ENCODE measurements at regions of chr15 and their contacts with region 1.

Region 1: DNA sequence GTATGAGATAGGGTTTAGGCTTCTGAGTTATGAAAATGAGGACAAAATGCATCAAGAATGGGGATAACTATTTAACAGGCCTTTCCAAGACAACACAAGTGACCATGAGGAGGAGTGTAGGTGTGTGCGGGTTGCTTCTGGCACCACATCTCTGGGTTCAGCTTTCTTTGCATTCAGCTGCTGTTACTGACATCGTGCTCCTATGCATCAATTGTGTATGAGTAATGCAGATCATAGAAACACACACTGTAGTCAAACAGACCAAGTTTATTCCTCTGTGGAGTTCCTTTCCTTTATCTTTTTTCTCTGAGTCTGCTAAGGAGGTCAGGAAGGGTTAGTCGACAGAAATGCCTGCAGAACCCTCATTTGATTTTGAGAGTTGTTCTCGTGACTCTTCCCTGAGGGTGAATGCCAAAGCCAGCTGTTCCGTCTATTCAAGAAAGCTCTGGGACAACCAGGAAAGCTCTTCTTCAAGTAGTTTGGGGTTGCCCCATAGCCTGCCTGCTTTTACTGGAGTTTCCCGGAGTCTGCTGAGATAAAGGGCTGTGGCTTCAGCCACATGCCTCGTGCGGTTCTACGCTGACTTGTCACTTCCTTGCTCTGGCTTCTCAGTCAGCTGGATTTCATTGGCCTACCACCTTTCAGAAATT is 136.7 kb upstream of the TLE3 start:
- DNase-seq: no peak
- H3K4me3 ChIP-seq: no peak overlapping the region
- H3K27ac ChIP-seq: no peak overlapping the region
- H3K4me1 ChIP-seq: no peaks in the 10 kb centered on the region
- H3K27me3 ChIP-seq: no peaks in the 10 kb centered on the region
- CTCF ChIP-seq: no peak
- POLR2A ChIP-seq: no peak

Region 2: GRCh38 chr15:69810431-69811354 is 423.7 kb before region 1 on chr15:
- intact Hi-C with region 1: loop called (anchors 5 kb)
- DNase-seq: no peak
- H3K4me3 ChIP-seq: no peak overlapping the region
- H3K27ac ChIP-seq: no peak overlapping the region
- H3K4me1 ChIP-seq: no peaks in the 10 kb centered on the region
- H3K27me3 ChIP-seq: no peaks in the 10 kb centered on the region
- CTCF ChIP-seq: no peak
- POLR2A ChIP-seq: no peak

Region 3: DNA sequence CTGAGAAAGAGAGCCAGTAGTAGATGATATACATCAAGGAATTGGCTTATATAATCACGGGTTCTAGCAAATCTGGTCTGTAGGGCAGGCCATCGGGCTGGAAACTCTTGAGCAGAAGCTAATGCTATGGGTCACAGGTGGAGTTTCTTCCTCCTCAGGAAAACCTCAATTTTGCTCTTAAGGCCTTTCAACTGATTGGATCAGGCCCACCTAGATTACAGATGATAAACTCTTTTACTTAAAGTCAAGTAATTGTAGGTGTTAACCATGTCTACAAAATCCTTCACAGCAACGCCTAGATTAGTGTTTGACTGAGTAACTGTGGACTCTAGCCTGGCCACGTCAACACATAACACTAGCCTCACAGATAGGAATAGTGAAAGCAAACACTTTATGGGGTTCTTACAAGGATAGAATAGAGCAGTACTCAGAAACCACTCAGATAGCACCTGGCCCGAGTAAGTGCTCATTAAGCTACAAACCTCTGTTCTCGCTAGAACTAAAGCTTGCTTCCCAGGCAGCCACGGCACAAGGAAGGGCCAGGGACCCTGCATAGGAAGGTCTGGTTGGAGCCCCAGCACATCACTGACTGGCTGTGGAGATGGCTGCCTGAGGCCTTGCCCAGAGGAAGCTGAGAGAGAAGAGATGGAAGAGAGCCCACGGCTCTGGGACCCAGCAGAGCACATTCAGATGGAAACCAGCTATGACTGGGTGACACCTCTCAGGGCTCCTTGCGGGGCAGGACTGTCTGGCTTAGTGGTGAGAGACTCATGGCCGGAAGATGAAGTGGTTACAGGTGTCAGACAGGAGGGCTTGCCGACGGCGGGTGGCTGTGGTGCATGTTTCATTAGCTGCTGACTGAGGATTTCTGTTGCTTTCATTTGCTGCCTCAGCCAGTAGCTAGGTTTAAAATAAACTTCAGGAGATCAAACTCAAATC is 65.8 kb after region 1 on chr15:
- intact Hi-C with region 1: loop called (anchors 2 kb)
- DNase-seq: no peak
- H3K4me3 ChIP-seq: no peak overlapping the region
- H3K27ac ChIP-seq: no peak overlapping the region
- H3K4me1 ChIP-seq: no peaks in the 10 kb centered on the region
- H3K27me3 ChIP-seq: no peaks in the 10 kb centered on the region
- CTCF ChIP-seq: no peak
- POLR2A ChIP-seq: no peak

Measured in breast epithelium (tissue), 4 donors.